IMR-90 (cell line): ENCODE measurements at regions of chr5 and their contacts with region 1.

Region 1: DNA sequence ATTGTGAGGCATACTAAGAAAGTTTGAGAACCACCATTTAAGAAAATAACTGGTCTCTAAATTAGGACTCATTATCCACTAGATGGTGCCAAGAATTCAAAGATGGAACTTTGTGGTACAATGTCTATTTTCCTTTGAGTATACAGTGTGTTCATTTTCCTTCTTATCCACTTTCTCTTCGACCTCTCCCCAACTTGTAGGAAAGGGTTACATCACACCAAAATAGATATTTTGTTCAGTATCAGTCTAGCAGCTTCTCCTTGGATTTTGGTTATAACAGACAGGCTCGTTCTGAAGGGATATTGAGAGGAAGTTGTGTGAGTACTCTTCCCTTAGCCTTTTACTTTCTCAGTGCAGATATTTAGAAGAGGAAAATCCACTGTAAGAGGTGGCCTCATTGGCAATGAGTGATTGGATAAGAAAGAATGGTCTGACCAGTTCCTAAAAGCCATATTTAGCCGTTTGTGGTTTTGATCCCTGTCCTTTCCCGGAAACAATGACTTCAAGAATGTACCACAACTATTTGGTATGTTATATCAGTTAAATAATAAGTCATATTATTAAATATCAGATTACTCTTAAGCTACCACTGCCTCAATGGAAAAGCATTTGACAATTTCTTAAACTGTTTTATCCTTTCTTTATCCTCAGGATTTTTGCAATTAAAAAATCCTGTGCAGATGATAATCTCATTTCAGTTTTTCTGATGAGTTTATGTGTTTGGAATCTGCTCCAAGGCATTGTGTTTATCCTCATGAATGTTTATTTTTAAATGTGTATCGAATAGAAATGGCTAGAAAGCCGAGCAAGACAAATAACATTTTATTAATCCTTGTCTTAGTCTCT is 69.0 kb upstream of the GRAMD2B start:
- DNase-seq: peak; percentile 98
- ATAC-seq: peak; percentile 86
- H3K4me3 ChIP-seq: peak overlapping the region; percentile 51; the same call in 1 of the 2 replicates
- H3K27ac ChIP-seq: peak overlapping the region; percentile 69
- H3K4me1 ChIP-seq: peaks cover 16% of the 10 kb centered on the region
- H3K27me3 ChIP-seq: no peaks in the 10 kb centered on the region
- CTCF ChIP-seq: peak; percentile 79
- POLR2A ChIP-seq: peak; percentile 44; the same call in 1 of the 2 replicates
- RAD21 ChIP-seq: peak; percentile 86

Region 2: DNA sequence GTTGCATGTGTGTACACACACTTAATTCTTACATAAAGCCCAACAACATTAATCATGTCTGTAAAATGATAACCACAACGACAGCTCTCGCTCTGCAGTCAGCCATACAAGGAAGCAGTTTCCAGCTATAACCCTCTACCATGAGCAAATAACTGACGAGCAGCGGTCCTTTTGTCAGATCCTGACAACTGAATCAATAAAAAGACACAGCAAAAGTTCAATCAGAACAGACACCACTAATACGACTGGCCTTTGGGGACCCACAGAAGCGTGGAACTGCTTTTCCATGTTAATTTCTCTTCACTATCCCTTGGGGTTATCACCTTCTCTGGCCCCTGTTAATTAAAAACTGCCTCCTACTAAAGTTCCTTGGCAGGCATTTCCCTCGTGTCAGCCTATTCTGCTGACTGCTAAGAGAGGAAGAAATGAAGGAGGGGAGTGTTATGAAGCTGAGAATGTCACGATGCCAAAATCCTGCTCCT is 653.8 kb before region 1 on chr5:
- CTCF ChIA-PET with region 1: no interaction called
- POLR2A ChIA-PET with region 1: no interaction called
- dilution Hi-C with region 1: no loop called
- in situ Hi-C with region 1: no loop called
- intact Hi-C with region 1: no loop called
- DNase-seq: no peak
- ATAC-seq: peak; percentile 40
- H3K4me3 ChIP-seq: no peak overlapping the region
- H3K27ac ChIP-seq: no peak overlapping the region
- H3K4me1 ChIP-seq: peaks cover 3% of the 10 kb centered on the region; the same call in 1 of the 2 replicates
- H3K27me3 ChIP-seq: no peaks in the 10 kb centered on the region
- CTCF ChIP-seq: no peak
- POLR2A ChIP-seq: no peak
- RAD21 ChIP-seq: no peak

Region 3: GRCh38 chr5:126422989-126423788 is 69.0 kb after region 1 on chr5 and contains the start of gene GRAMD2B:
- CTCF ChIA-PET with region 1: no interaction called
- POLR2A ChIA-PET with region 1: no interaction called
- dilution Hi-C with region 1: no loop called
- in situ Hi-C with region 1: no loop called
- intact Hi-C with region 1: loop called (anchors 1 kb)
- DNase-seq: peak; percentile 88
- ATAC-seq: peak; percentile 98
- H3K4me3 ChIP-seq: peak within 1 kb of the TSS; percentile 90
- H3K27ac ChIP-seq: peak within 1 kb of the TSS; percentile 90
- H3K4me1 ChIP-seq: peaks cover 3% of the 10 kb centered on the region; the same call in 1 of the 2 replicates
- H3K27me3 ChIP-seq: no peaks in the 10 kb centered on the region
- CTCF ChIP-seq: no peak
- POLR2A ChIP-seq: peak; percentile 84
- RAD21 ChIP-seq: peak; percentile 24
- total RNA-seq, gene GRAMD2B: 15.8 and 20.3 TPM in 2 replicates

Region 4: GRCh38 chr5:126471875-126472537 is 117.8 kb after region 1 on chr5:
- CTCF ChIA-PET with region 1: interaction called, 3 read pairs
- POLR2A ChIA-PET with region 1: no interaction called
- dilution Hi-C with region 1: no loop called
- in situ Hi-C with region 1: no loop called
- intact Hi-C with region 1: loop called (anchors 5 kb)
- DNase-seq: peak; percentile 88
- ATAC-seq: peak; percentile 93
- H3K4me3 ChIP-seq: no peak overlapping the region
- H3K27ac ChIP-seq: peak overlapping the region; percentile 96
- H3K4me1 ChIP-seq: peaks cover 14% of the 10 kb centered on the region
- H3K27me3 ChIP-seq: no peaks in the 10 kb centered on the region
- CTCF ChIP-seq: no peak
- POLR2A ChIP-seq: no peak
- RAD21 ChIP-seq: 0 out of 2 replicates have a peak, but pooled peaks have one; percentile 3

Region 5: GRCh38 chr5:126519634-126520592 is 165.7 kb after region 1 on chr5:
- CTCF ChIA-PET with region 1: no interaction called
- POLR2A ChIA-PET with region 1: no interaction called
- dilution Hi-C with region 1: no loop called
- in situ Hi-C with region 1: no loop called
- intact Hi-C with region 1: no loop called
- DNase-seq: peak; percentile 40
- ATAC-seq: peak; percentile 42; the same call in 1 of the 2 replicates
- H3K4me3 ChIP-seq: no peak overlapping the region
- H3K27ac ChIP-seq: peak overlapping the region; percentile 28; the same call in 1 of the 2 replicates
- H3K4me1 ChIP-seq: peaks cover 10% of the 10 kb centered on the region
- H3K27me3 ChIP-seq: no peaks in the 10 kb centered on the region
- CTCF ChIP-seq: no peak
- POLR2A ChIP-seq: no peak
- RAD21 ChIP-seq: no peak

Region 6: DNA sequence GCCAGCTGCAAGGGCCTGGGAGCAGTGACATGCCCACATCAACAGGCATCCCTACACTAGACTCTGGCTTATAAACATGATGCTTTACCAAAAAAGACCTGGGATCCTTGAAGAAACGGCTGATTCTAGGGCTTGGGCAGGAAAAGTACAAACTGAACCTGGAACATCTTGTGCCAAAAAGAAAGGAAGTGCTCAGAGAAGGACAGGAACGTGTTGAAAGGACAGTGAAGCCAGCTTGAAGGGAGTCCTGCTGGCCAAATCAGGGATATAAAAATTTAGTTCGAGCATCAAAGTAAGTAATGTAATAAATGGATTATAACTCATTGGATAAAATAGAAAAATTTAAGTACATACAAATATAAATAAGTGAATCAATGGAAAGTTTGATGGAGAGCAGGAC is 182.6 kb after region 1 on chr5:
- CTCF ChIA-PET with region 1: interaction called, 13 read pairs
- POLR2A ChIA-PET with region 1: no interaction called
- dilution Hi-C with region 1: loop called (anchors 10 kb)
- in situ Hi-C with region 1: loop called (anchors 5 kb)
- intact Hi-C with region 1: loop called (anchors 1 kb)
- DNase-seq: no peak
- ATAC-seq: no peak
- H3K4me3 ChIP-seq: no peak overlapping the region
- H3K27ac ChIP-seq: no peak overlapping the region
- H3K4me1 ChIP-seq: peaks cover 8% of the 10 kb centered on the region
- H3K27me3 ChIP-seq: no peaks in the 10 kb centered on the region
- CTCF ChIP-seq: peak; percentile 5; the same call in 1 of the 2 replicates
- POLR2A ChIP-seq: no peak
- RAD21 ChIP-seq: no peak

Region 7: DNA sequence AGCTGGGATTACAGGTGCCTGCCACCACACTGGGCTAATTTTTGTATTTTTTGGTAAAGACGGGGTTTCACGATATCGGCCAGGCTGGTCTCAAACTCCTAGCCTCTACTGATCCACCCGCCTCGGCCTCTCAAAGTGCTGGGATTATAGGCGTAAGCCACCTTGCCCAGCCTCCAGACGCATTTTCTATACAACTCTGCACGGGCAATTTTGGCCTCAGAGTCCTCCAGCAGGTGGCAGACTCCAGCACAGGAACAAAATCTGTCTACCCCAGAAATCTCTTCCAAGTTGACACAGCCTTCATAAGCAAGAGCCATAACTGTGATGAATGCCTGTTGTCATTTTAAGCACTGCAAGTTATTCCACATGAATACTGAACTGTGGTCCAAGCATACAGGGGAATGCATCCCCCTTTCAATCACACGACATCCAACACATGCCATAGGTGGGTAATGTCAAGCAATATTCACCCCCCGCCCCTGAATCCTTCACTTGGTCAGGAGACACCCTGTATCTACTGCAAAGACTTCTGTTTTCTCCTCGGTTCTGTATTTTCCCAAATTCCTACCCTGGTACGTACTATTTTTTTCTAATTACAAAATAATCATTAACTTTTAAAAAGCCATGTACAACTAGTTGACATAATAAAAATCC is 190.0 kb after region 1 on chr5:
- CTCF ChIA-PET with region 1: interaction called, 13 read pairs
- POLR2A ChIA-PET with region 1: no interaction called
- dilution Hi-C with region 1: loop called (anchors 10 kb)
- in situ Hi-C with region 1: loop called (anchors 5 kb)
- intact Hi-C with region 1: loop called (anchors 1 kb)
- DNase-seq: peak; percentile 44
- ATAC-seq: peak; percentile 64
- H3K4me3 ChIP-seq: no peak overlapping the region
- H3K27ac ChIP-seq: no peak overlapping the region
- H3K4me1 ChIP-seq: no peaks in the 10 kb centered on the region
- H3K27me3 ChIP-seq: no peaks in the 10 kb centered on the region
- CTCF ChIP-seq: peak; percentile 48
- POLR2A ChIP-seq: no peak
- RAD21 ChIP-seq: peak; percentile 36

Region 8: GRCh38 chr5:126594676-126595485 is 240.6 kb after region 1 on chr5 and contains the start of gene ALDH7A1:
- CTCF ChIA-PET with region 1: interaction called, 3 read pairs
- POLR2A ChIA-PET with region 1: no interaction called
- dilution Hi-C with region 1: no loop called
- in situ Hi-C with region 1: no loop called
- intact Hi-C with region 1: loop called (anchors 1 kb)
- DNase-seq: no peak
- ATAC-seq: peak; percentile 96
- H3K4me3 ChIP-seq: peak within 1 kb of the TSS; percentile 69
- H3K27ac ChIP-seq: peak within 1 kb of the TSS; percentile 70
- H3K4me1 ChIP-seq: peaks cover 4% of the 10 kb centered on the region
- H3K27me3 ChIP-seq: no peaks in the 10 kb centered on the region
- CTCF ChIP-seq: peak; percentile 56
- POLR2A ChIP-seq: peak; percentile 67
- RAD21 ChIP-seq: peak; percentile 50
- total RNA-seq, gene ALDH7A1: 40.9 and 43.9 TPM in 2 replicates